ENCODE measurements at regions of chr7 and their contacts with region 1.

Region 1: GRCh38 chr7:128963327-128963757 is 25.6 kb downstream of the IRF5 start:
- DNase-seq: peak; percentile 70
- H3K4me3 Mint-ChIP-seq: no peak overlapping the region
- H3K27ac Mint-ChIP-seq: peak overlapping the region; percentile 73
- H3K4me1 Mint-ChIP-seq: peaks cover 37% of the 10 kb centered on the region
- H3K27me3 Mint-ChIP-seq: no peaks in the 10 kb centered on the region

Region 2: GRCh38 chr7:128739048-128739962 is 224.0 kb before region 1 on chr7 and contains the start of gene CALU:
- CTCF ChIA-PET with region 1: no interaction called
- POLR2A ChIA-PET with region 1: no interaction called
- intact Hi-C with region 1: loop called (anchors 2 kb)
- DNase-seq: peak; percentile 97
- H3K4me3 Mint-ChIP-seq: peak within 1 kb of the TSS; percentile 97
- H3K27ac Mint-ChIP-seq: peak within 1 kb of the TSS; percentile 90
- H3K4me1 Mint-ChIP-seq: peaks cover 43% of the 10 kb centered on the region
- H3K27me3 Mint-ChIP-seq: no peaks in the 10 kb centered on the region
- total RNA-seq, gene CALU: 43.2 to 44.2 TPM

Region 3: DNA sequence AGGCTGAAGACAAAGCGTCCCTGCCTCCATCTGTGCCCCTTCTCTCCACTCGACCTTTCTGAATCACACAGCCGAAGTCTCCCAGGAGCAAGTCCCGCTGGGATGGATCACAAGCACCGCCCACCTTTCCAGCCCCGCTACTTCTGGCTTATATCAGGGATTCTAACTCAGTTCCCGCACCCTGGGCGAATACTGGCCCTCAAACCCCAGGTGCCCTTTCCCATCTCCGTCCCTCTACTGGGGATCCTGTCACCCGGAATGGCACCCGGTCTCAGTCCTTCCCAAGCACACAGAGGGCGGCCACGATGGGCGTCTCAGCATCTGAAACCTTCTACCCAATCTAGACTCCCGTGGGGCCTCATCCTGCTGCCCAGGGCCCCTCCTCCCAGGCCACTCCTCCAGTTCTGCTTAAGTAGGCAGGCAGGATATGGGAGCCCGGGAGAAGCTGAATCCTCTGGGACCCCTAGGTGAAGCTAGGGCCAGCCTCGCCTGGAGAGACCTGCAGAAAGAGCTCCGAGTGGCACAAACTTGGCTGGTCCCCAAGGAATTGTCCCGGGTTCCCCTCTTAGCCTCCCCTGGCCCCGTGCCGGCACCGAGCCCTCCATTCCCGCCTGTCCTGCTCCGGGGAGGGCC is 53.6 kb before region 1 on chr7:
- CTCF ChIA-PET with region 1: no interaction called
- POLR2A ChIA-PET with region 1: no interaction called
- intact Hi-C with region 1: loop called (anchors 10 kb)
- DNase-seq: no peak
- H3K4me3 Mint-ChIP-seq: no peak overlapping the region
- H3K27ac Mint-ChIP-seq: no peak overlapping the region
- H3K4me1 Mint-ChIP-seq: peaks cover 4% of the 10 kb centered on the region
- H3K27me3 Mint-ChIP-seq: peaks cover 45% of the 10 kb centered on the region

Region 4: GRCh38 chr7:128940494-128941322 is 22.6 kb before region 1 on chr7:
- CTCF ChIA-PET with region 1: no interaction called
- POLR2A ChIA-PET with region 1: interaction called, 5 read pairs
- intact Hi-C with region 1: loop called (anchors 2 kb)
- DNase-seq: peak; percentile 51
- H3K4me3 Mint-ChIP-seq: peak overlapping the region; percentile 58
- H3K27ac Mint-ChIP-seq: peak overlapping the region; percentile 62
- H3K4me1 Mint-ChIP-seq: peaks cover 39% of the 10 kb centered on the region
- H3K27me3 Mint-ChIP-seq: peaks cover 6% of the 10 kb centered on the region

Region 5: DNA sequence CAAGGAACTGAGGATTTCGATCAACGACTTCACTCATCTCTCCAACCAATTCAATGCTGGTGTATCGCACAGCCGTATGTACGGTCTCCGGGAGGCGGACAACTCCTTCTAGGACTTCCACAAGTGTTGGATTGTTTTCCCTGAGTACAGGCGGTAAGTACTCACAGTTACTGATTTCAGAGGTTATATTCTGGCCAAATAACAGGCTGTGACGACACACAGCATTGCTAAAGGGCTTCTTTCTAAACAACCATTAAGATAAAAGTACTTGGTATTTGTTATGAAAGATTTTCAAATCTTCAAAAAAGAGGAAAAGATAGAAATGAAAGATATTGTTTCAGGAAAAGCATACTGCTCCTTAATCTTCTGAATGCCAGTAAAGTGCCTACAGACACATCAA is 26.6 kb after region 1 on chr7:
- CTCF ChIA-PET with region 1: no interaction called
- POLR2A ChIA-PET with region 1: no interaction called
- intact Hi-C with region 1: no loop called
- DNase-seq: no peak
- H3K4me3 Mint-ChIP-seq: no peak overlapping the region
- H3K27ac Mint-ChIP-seq: no peak overlapping the region
- H3K4me1 Mint-ChIP-seq: no peaks in the 10 kb centered on the region
- H3K27me3 Mint-ChIP-seq: no peaks in the 10 kb centered on the region

Region 6: GRCh38 chr7:129009437-129009836 is 46.1 kb after region 1 on chr7:
- CTCF ChIA-PET with region 1: no interaction called
- POLR2A ChIA-PET with region 1: no interaction called
- intact Hi-C with region 1: loop called (anchors 1 kb)
- DNase-seq: peak; percentile 11
- H3K4me3 Mint-ChIP-seq: no peak overlapping the region
- H3K27ac Mint-ChIP-seq: no peak overlapping the region
- H3K4me1 Mint-ChIP-seq: peaks cover 46% of the 10 kb centered on the region
- H3K27me3 Mint-ChIP-seq: no peaks in the 10 kb centered on the region

Region 7: GRCh38 chr7:129054438-129055293 is 91.3 kb after region 1 on chr7 and contains the start of gene TNPO3:
- CTCF ChIA-PET with region 1: no interaction called
- POLR2A ChIA-PET with region 1: interaction called, 5 read pairs
- intact Hi-C with region 1: loop called (anchors 2 kb)
- DNase-seq: peak; percentile 94
- H3K4me3 Mint-ChIP-seq: peak within 1 kb of the TSS; percentile 97
- H3K27ac Mint-ChIP-seq: peak within 1 kb of the TSS; percentile 98
- H3K4me1 Mint-ChIP-seq: peaks cover 26% of the 10 kb centered on the region
- H3K27me3 Mint-ChIP-seq: peaks cover 7% of the 10 kb centered on the region
- total RNA-seq, gene TNPO3: 53.4 to 54.5 TPM

Region 8: DNA sequence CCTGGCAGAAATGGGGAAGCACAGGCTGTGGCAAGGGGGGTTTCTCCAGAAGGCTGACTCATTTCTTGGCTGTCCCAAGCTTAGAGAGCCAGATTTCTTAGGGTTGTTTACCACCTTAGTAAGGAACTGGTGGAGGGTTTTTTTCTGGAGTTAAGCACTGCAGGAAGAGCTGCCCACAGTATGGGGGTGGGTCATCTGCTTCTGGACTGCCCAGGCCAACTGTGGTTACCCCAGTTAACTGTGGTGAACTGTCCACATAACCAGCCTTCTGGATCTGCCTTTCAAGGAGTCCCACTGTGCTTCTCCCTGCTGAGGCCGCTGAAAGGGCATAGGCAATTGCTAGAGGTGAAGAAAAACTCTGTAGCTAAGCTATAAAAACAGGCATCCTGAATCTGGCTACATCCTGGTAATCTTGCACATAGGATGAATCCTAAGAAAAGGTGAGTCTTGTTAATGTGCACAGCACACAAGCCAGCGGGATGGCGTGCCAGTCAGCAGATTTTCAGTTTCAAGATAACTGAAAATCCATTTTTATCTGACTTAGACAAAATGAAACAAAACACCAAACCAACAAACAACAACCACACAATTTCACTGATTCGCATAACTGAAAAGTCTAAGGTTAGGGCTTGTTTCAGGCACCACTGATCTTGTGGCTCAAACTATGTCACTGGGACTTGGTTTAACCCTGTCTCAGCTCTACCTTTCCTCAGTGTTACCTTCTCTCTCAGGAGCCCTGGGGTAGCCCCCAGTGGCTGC is 159.6 kb after region 1 on chr7:
- CTCF ChIA-PET with region 1: no interaction called
- POLR2A ChIA-PET with region 1: no interaction called
- intact Hi-C with region 1: loop called (anchors 2 kb)
- DNase-seq: peak; percentile 72
- H3K4me3 Mint-ChIP-seq: peak overlapping the region; percentile 21
- H3K27ac Mint-ChIP-seq: peak overlapping the region; percentile 72
- H3K4me1 Mint-ChIP-seq: peaks cover 28% of the 10 kb centered on the region
- H3K27me3 Mint-ChIP-seq: peaks cover 16% of the 10 kb centered on the region

Region 9: GRCh38 chr7:129240119-129240815 is 276.9 kb after region 1 on chr7:
- CTCF ChIA-PET with region 1: no interaction called
- POLR2A ChIA-PET with region 1: no interaction called
- intact Hi-C with region 1: no loop called
- DNase-seq: no peak
- H3K4me3 Mint-ChIP-seq: no peak overlapping the region
- H3K27ac Mint-ChIP-seq: no peak overlapping the region
- H3K4me1 Mint-ChIP-seq: peaks cover 2% of the 10 kb centered on the region
- H3K27me3 Mint-ChIP-seq: no peaks in the 10 kb centered on the region

Measured in activated CD4-positive, alpha-beta memory T cell treated with anti-CD3 and anti-CD28 coated beads for 36 hours (primary cell).